ENCODE measurements at regions of chr3 and their contacts with region 1.

Region 1: GRCh38 chr3:14402304-14402811 is at the start of gene SLC6A6:
- DNase-seq: peak; percentile 97
- ATAC-seq: peak; percentile 80
- H3K4me3 ChIP-seq: peak within 1 kb of the TSS; percentile 53 to 87 (median 85)
- H3K4me3 Mint-ChIP-seq: peak within 1 kb of the TSS; percentile 99
- H3K27ac ChIP-seq: peak within 1 kb of the TSS; percentile 81 to 89
- H3K27ac Mint-ChIP-seq: peak within 1 kb of the TSS; percentile 98
- H3K4me1 ChIP-seq: peaks cover 39 to 55% of the 10 kb centered on the region in 2 donors
- H3K4me1 Mint-ChIP-seq: peaks cover 60% of the 10 kb centered on the region
- H3K27me3 ChIP-seq: no peaks in the 10 kb centered on the region
- H3K27me3 Mint-ChIP-seq: no peaks in the 10 kb centered on the region
- CTCF ChIP-seq: peak; percentile 67
- total RNA-seq, gene SLC6A6: 48.7 and 50.1 TPM in 2 replicates

Region 2: DNA sequence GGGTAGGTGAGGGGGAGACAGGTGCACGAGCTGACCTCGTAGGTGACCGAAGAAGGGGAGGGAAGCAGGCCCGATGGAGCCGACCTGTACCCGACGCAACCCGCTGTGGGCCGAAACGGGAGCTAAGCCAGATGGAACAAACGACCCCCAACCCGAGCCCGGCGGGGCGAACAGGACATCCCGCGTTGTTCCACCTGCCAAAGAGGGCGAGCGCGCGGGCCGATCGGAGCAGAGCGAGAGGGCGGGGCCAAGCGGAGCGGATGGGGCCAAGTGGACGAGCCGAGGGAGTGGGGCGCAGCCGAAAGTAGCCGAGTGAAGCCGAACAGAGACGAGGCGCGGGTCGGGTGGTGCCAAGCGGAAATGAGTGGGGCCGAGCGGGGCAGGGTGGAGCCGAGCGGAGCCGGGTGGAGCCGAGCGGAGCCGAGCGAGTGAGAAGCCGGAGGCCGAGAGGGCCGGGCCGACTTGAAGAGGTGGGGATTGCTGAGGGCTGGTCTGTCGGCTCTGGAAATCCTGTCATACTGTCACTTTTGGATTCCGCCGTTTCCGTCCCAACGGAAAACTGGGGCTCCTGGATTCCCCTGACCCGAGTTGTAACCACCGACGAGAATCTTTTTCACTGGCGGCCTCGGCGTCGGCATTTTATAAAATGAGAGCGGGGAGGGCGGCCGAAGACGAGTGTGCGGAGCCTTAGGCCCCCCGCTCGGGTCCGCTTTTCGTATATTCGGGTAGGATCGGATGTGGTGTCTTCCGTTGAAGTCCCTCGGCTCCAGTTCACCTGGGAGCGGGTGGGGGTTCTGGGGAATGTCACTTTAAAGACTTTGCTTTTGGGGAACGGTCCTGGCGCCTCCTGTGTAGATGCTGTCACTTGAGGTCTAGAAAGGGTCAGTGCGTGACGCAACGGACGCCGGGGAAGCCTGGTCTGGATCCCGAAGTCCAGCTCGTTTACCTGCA is 506.9 kb before region 1 on chr3:
- CTCF ChIA-PET with region 1: no interaction called
- POLR2A ChIA-PET with region 1: no interaction called
- intact Hi-C with region 1: loop called (anchors 10 kb)
- DNase-seq: peak; percentile 92
- ATAC-seq: peak; percentile 98
- H3K4me3 ChIP-seq: peak overlapping the region; percentile 32 to 75 (median 64)
- H3K4me3 Mint-ChIP-seq: peak overlapping the region; percentile 89
- H3K27ac ChIP-seq: peak overlapping the region in 1 of 2 donors; percentile 58
- H3K27ac Mint-ChIP-seq: peak overlapping the region; percentile 69
- H3K4me1 ChIP-seq: peaks cover 17 to 33% of the 10 kb centered on the region in 2 donors
- H3K4me1 Mint-ChIP-seq: peaks cover 30% of the 10 kb centered on the region
- H3K27me3 ChIP-seq: peaks cover 0 to 7% (median 0%) of the 10 kb centered on the region in 4 experiments
- H3K27me3 Mint-ChIP-seq: peaks cover 20% of the 10 kb centered on the region
- CTCF ChIP-seq: no peak

Region 3: DNA sequence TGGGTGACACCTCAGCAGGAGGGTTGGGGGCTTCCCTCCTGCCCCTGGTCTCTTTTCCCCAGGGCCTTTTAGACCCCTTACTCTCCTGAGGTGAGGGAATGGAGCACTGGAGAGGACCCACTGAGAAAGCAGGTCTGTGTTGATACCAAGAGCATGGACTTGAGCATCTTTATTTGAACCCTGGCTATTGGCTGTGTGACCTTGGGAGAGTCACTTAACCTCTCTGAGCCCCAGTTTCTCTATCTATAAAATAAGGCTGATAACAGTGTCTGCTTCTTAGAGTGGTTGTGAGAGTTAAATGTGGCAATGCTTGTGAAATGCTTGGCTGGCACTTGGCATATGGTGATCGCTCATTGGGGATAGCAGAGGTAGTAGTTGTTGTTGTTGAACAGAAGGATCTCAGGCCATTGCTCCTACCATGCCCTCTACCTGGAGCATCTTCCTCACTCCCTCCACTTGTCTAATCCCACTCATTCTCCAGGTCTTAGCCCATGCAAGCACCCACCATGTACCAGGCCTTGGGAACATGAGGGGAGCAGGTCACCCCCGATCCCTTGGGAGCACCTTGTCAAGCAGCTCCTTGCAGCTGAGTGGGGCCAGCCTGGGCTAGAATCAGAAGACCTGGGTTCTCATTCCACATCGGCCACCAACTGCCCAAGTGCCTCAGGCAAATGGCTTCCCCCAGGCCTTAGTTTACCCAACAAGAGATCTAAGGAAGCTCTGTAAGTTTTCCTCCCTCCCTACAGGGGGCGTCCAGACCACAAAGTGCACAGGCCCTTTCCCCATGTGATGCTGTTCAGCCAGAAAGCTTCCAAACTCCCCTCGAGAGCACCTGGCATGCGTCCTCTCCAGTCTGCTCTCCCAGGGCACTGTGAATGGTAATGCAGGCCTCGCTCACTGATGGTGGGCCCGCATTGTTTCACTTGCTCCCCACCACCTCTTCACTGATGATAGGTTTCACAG is 127.1 kb before region 1 on chr3:
- CTCF ChIA-PET with region 1: no interaction called
- POLR2A ChIA-PET with region 1: no interaction called
- intact Hi-C with region 1: no loop called
- DNase-seq: no peak
- ATAC-seq: no peak
- H3K4me3 ChIP-seq: no peak overlapping the region
- H3K4me3 Mint-ChIP-seq: no peak overlapping the region
- H3K27ac ChIP-seq: no peak overlapping the region
- H3K27ac Mint-ChIP-seq: no peak overlapping the region
- H3K4me1 ChIP-seq: no peaks in the 10 kb centered on the region
- H3K4me1 Mint-ChIP-seq: no peaks in the 10 kb centered on the region
- H3K27me3 ChIP-seq: peaks cover 0 to 4% (median 0%) of the 10 kb centered on the region in 4 experiments
- H3K27me3 Mint-ChIP-seq: peaks cover 12% of the 10 kb centered on the region
- CTCF ChIP-seq: no peak

Region 4: GRCh38 chr3:14426063-14426620 is 23.8 kb after region 1 on chr3:
- CTCF ChIA-PET with region 1: interaction called, 33 read pairs
- POLR2A ChIA-PET with region 1: interaction called, 38 read pairs
- intact Hi-C with region 1: loop called (anchors 1 kb)
- DNase-seq: peak; percentile 74
- ATAC-seq: peak; percentile 56
- H3K4me3 ChIP-seq: peak overlapping the region in 1 of 5 experiments; percentile 23
- H3K4me3 Mint-ChIP-seq: peak overlapping the region; percentile 67
- H3K27ac ChIP-seq: peak overlapping the region; percentile 64 to 98
- H3K27ac Mint-ChIP-seq: peak overlapping the region; percentile 94
- H3K4me1 ChIP-seq: peaks cover 78 to 81% of the 10 kb centered on the region in 2 donors
- H3K4me1 Mint-ChIP-seq: peaks cover 87% of the 10 kb centered on the region
- H3K27me3 ChIP-seq: no peaks in the 10 kb centered on the region
- H3K27me3 Mint-ChIP-seq: no peaks in the 10 kb centered on the region
- CTCF ChIP-seq: no peak

Region 5: DNA sequence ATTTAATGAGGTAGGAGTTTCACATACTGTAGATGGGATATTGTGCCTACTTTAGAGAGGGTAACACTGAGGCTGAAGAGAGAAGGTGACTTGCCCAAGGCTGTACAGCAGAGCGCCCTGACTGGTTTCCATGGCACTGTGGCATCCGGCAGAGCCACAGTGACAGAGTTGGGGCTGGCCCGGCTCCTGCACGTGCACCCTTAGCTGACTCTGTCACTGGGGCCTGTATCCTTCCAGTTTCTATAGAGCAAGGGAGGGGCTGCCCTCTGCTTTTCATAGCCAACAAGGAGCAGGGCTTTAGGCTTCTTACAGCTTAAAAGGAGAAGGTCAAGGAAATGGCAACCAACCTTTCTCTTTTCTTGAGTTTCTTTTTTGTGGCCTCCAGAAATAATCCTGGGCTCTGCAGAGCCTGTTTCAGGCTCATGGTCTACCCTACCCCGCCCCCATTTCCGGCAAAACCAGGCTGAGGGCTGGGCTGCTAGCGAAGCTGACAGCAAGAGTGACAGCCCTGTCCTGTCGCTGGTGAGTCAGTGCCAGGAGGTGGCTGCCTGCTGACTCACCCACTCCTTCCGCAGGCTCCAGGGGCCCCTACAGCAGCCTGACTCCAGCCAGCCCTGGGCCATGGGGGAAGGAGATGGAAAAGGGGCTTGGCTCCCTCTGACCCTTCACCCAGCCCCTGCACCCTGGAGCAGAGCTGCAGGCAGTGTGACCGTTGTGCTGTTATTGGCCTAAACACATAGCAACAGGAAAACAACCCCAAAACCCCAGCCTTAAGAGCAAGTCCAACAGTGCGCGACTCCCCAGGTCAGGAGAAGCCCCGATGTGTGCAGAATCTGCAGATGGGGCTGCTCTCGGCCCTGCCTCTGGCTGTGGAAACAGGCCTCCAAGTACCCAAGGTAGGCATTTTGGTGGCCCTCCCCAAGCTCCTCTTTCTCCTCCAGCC is 29.8 kb after region 1 on chr3:
- CTCF ChIA-PET with region 1: interaction called, 33 read pairs
- POLR2A ChIA-PET with region 1: interaction called, 38 read pairs
- intact Hi-C with region 1: loop called (anchors 1 kb)
- DNase-seq: peak; percentile 94
- ATAC-seq: peak; percentile 78
- H3K4me3 ChIP-seq: peak overlapping the region in 4 of 5 experiments; percentile 5 to 59 (median 34)
- H3K4me3 Mint-ChIP-seq: peak overlapping the region; percentile 80
- H3K27ac ChIP-seq: peak overlapping the region; percentile 93 to 98
- H3K27ac Mint-ChIP-seq: peak overlapping the region; percentile 94
- H3K4me1 ChIP-seq: peaks cover 75 to 89% of the 10 kb centered on the region in 2 donors
- H3K4me1 Mint-ChIP-seq: peaks cover 88% of the 10 kb centered on the region
- H3K27me3 ChIP-seq: no peaks in the 10 kb centered on the region
- H3K27me3 Mint-ChIP-seq: no peaks in the 10 kb centered on the region
- CTCF ChIP-seq: no peak